Endothelial cell of umbilical vein (primary cell): ENCODE measurements at regions of chr2 and their contacts with region 1.

Region 1: DNA sequence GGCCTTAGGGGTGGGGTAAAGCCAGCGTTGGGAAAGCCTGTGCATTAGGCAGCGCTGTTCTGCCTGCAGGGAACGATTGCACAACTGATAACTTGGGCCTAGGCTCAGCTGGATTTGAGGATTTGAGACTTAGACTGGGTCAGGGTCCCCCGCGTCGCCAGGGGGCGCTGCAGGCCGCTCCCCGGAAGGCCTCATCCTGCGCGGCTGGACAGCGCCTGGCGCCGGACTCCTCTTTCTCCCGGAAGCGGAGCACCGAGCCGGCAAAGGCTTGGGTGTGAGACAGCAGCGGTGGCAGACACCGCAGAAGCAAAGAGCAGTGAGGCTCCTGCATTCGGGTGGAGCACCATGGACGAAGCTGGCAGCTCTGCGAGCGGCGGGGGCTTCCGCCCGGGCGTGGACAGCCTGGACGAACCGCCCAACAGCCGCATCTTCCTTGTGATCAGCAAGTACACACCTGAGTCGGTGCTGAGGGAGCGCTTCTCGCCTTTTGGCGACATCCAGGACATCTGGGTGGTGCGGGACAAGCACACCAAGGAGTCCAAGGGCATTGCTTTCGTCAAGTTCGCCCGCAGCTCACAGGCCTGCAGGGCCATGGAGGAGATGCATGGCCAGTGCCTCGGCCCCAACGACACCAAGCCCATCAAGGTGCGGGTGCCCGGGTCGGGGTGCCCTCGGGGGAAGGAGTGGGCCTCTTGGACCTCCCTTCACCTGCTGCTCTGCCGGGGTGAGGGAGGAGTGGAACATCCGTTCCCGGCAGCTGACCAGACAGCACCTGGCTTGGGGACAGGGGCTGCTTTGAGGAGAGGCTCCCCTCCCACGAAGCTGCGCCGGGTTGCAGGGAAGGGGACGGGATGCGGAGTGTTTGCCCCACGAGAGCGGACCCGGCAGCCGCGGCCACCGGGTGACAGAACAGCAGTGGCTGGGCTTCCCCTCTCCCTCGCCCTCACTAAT is at the start of gene RBM45:
- DNase-seq: peak; percentile 84
- H3K4me3 ChIP-seq: peak within 1 kb of the TSS; percentile 76 to 84 (median 76)
- H3K27ac ChIP-seq: no peak within 1 kb of the TSS
- H3K4me1 ChIP-seq: peaks cover 6% of the 10 kb centered on the region
- H3K27me3 ChIP-seq: no peaks in the 10 kb centered on the region
- CTCF ChIP-seq: peak; percentile 98 to 100
- POLR2A ChIP-seq: peak; percentile 92
- total RNA-seq, gene RBM45: 11.2 and 12.4 TPM in 2 replicates

Region 2: DNA sequence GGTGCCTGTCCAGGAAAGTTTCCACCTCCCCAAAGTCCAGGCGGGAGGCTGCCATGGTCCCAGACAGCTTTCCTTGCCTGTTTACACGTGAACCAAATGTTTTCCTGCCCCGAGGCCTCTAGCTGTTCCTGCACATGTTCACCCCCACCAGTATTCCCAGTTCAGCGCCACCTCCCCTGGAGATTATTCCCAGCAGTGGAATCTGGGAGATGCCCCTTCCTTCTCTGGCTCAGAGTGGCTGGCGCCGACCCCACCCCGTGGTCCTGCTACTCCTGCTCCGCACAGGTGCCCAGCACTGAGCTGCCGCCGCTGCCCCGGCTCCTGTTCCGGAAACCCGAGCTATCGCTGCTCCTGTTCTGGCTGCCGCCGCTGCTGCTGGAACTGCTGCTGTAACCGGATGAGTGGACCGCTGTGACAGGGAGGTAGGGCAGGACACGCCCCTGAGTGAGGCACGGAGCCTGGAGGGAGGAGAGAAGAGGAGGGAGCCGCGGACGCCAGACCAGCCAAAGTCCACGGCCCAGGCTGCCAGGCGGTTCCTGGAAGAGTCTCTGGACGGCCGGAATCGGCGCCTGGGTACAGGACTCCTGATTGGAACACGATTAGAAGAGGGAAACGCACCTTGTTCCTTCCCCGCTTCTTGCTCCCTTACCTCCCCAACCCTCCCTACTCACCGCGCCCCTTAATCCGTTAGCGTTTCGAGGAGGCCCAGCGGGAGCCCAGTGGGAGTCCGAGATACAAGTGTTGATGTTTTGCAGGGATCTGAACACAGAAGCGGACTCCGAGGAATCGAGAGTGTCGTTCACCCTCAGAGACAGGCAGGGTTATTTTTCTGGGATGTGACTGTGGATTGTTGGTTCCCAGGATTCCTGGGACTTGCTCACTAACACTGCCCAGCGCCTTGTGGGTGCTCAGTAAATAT is 39.8 kb before region 1 on chr2 and contains the start of gene PDE11A:
- CTCF ChIA-PET with region 1: no interaction called
- POLR2A ChIA-PET with region 1: no interaction called
- dilution Hi-C with region 1: no loop called
- intact Hi-C with region 1: loop called (anchors 2 kb)
- DNase-seq: peak; percentile 52
- H3K4me3 ChIP-seq: peak within 1 kb of the TSS; percentile 2 to 61 (median 50)
- H3K27ac ChIP-seq: no peak within 1 kb of the TSS
- H3K4me1 ChIP-seq: peaks cover 16% of the 10 kb centered on the region
- H3K27me3 ChIP-seq: peaks cover 5 to 6% of the 10 kb centered on the region in 2 experiments
- CTCF ChIP-seq: no peak
- POLR2A ChIP-seq: no peak
- total RNA-seq, gene PDE11A: 0.25 and 0.51 TPM in 2 replicates

Region 3: GRCh38 chr2:178280244-178280852 is 167.9 kb after region 1 on chr2:
- CTCF ChIA-PET with region 1: interaction called, 11 read pairs
- POLR2A ChIA-PET with region 1: no interaction called
- dilution Hi-C with region 1: no loop called
- intact Hi-C with region 1: loop called (anchors 1 kb)
- DNase-seq: peak; percentile 71
- H3K4me3 ChIP-seq: no peak overlapping the region
- H3K27ac ChIP-seq: no peak overlapping the region
- H3K4me1 ChIP-seq: peaks cover 22% of the 10 kb centered on the region
- H3K27me3 ChIP-seq: peaks cover 0 to 4% of the 10 kb centered on the region in 2 experiments
- CTCF ChIP-seq: peak; percentile 48 to 49
- POLR2A ChIP-seq: no peak

Region 4: GRCh38 chr2:178397002-178397605 is 284.6 kb after region 1 on chr2:
- CTCF ChIA-PET with region 1: interaction called, 7 read pairs
- POLR2A ChIA-PET with region 1: no interaction called
- dilution Hi-C with region 1: no loop called
- intact Hi-C with region 1: loop called (anchors 5 kb)
- DNase-seq: peak; percentile 59
- H3K4me3 ChIP-seq: no peak overlapping the region
- H3K27ac ChIP-seq: no peak overlapping the region
- H3K4me1 ChIP-seq: no peaks in the 10 kb centered on the region
- H3K27me3 ChIP-seq: no peaks in the 10 kb centered on the region
- CTCF ChIP-seq: peak; percentile 43 to 51
- POLR2A ChIP-seq: no peak

Region 5: GRCh38 chr2:178478439-178479274 is 366.2 kb after region 1 on chr2 and contains the start of gene FKBP7:
- CTCF ChIA-PET with region 1: interaction called, 3 read pairs
- POLR2A ChIA-PET with region 1: no interaction called
- dilution Hi-C with region 1: no loop called
- intact Hi-C with region 1: loop called (anchors 1 kb)
- DNase-seq: peak; percentile 85
- H3K4me3 ChIP-seq: peak within 1 kb of the TSS; percentile 51 to 98 (median 91)
- H3K27ac ChIP-seq: peak within 1 kb of the TSS; percentile 88
- H3K4me1 ChIP-seq: peaks cover 29% of the 10 kb centered on the region
- H3K27me3 ChIP-seq: no peaks in the 10 kb centered on the region
- CTCF ChIP-seq: peak; percentile 68 to 71
- POLR2A ChIP-seq: peak; percentile 63
- total RNA-seq, gene FKBP7: 18.3 and 20.5 TPM in 2 replicates

Region 6: GRCh38 chr2:178589337-178589736 is 476.9 kb after region 1 on chr2:
- CTCF ChIA-PET with region 1: no interaction called
- POLR2A ChIA-PET with region 1: no interaction called
- dilution Hi-C with region 1: no loop called
- intact Hi-C with region 1: no loop called
- DNase-seq: no peak
- H3K4me3 ChIP-seq: no peak overlapping the region
- H3K27ac ChIP-seq: no peak overlapping the region
- H3K4me1 ChIP-seq: no peaks in the 10 kb centered on the region
- H3K27me3 ChIP-seq: no peaks in the 10 kb centered on the region
- CTCF ChIP-seq: no peak
- POLR2A ChIP-seq: no peak

Region 7: GRCh38 chr2:179106676-179107428 is 994.4 kb after region 1 on chr2:
- CTCF ChIA-PET with region 1: no interaction called
- POLR2A ChIA-PET with region 1: no interaction called
- dilution Hi-C with region 1: no loop called
- intact Hi-C with region 1: loop called (anchors 5 kb)
- DNase-seq: peak; percentile 99
- H3K4me3 ChIP-seq: no peak overlapping the region
- H3K27ac ChIP-seq: peak overlapping the region; percentile 73
- H3K4me1 ChIP-seq: peaks cover 25% of the 10 kb centered on the region
- H3K27me3 ChIP-seq: no peaks in the 10 kb centered on the region
- CTCF ChIP-seq: no peak
- POLR2A ChIP-seq: no peak